ENCODE measurements at regions of chr3 and their contacts with region 1.

Region 1: DNA sequence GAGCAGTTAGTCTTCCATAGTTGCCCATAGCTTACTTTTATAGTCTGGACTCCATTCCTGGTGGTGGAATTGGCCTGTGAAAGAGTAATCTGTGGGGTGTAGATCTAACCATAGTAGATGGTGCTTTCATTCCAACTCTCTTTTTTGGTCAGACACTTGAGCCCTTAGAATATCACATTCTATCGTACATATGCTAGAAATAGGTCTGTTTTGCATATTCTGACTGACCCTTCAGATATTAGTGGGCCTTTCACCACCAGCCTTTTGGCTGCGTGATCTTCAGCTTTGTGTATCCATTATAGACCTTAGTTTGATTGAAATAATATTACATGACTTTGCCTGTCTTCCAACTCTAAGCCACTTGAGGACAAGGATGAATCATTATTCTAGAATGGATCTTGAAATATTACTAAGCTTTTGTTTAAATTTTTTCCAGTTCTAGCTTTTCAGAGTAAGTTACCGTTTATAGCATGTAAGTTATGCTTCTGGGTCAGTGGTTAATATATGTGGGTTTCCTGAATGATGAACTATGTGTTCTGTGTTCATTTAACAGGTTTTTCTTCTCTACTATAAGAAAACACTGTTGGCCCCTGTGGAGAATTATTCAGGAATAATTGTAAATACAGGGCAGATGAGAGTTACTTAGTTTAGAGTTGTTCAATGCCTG is 8.7 kb downstream of the RAB7A start:
- DNase-seq: no peak
- ATAC-seq: no peak
- H3K4me3 ChIP-seq: no peak overlapping the region
- H3K27ac ChIP-seq: no peak overlapping the region
- H3K4me1 ChIP-seq: no peaks in the 10 kb centered on the region
- H3K27me3 ChIP-seq: no peaks in the 10 kb centered on the region
- CTCF ChIP-seq: no peak

Region 2: DNA sequence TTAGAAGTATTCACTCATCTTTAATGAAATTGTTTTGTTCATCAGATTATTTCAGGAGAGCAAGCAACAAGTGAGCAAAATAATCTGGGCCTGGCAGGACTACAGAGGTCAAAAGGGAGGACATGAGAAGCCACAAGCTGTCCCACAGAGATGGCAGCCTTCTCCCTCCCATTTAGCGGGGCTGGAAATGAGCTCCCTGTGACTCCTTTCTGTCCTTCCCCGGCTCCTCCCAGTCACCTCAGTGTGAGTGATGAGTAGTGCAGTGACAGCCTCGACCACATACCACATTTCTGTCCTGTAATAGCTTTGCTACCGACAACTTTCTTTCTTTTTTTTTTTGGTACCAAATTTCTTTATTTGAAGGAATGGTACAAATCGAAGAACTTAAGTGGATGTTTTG is 29.3 kb after region 1 on chr3:
- CTCF ChIA-PET with region 1: no interaction called
- POLR2A ChIA-PET with region 1: interaction called, 24 read pairs
- intact Hi-C with region 1: no loop called
- DNase-seq: no peak
- ATAC-seq: no peak
- H3K4me3 ChIP-seq: no peak overlapping the region
- H3K27ac ChIP-seq: no peak overlapping the region
- H3K4me1 ChIP-seq: no peaks in the 10 kb centered on the region
- H3K27me3 ChIP-seq: no peaks in the 10 kb centered on the region
- CTCF ChIP-seq: no peak

Measured in PC-3 (cell line).